Mucosa of descending colon (tissue), 3 donors: ENCODE measurements at regions of chr11 and their contacts with region 1.

Region 1: GRCh38 chr11:36265793-36266628 is 23.2 kb downstream of the COMMD9 start:
- DNase-seq: peak in 2 of 3 donors; percentile 68 to 72
- ATAC-seq: peak; percentile 79
- H3K4me3 ChIP-seq: no peak overlapping the region
- H3K4me1 ChIP-seq: no peaks in the 10 kb centered on the region
- CTCF ChIP-seq: peak; percentile 62

Region 2: GRCh38 chr11:35617687-35618496 is 648.1 kb before region 1 on chr11 and contains the start of gene FJX1:
- intact Hi-C with region 1: loop called in 1 of 2 experiments (anchors 5 kb)
- DNase-seq: peak; percentile 21 to 59 (median 41)
- ATAC-seq: peak; percentile 52
- H3K4me3 ChIP-seq: no peak within 1 kb of the TSS
- H3K4me1 ChIP-seq: peaks cover 13% of the 10 kb centered on the region
- CTCF ChIP-seq: no peak
- total RNA-seq, gene FJX1: 0.36 to 1.7 (median 0.84) TPM